IMR-90 (cell line): ENCODE measurements at regions of chr20 and their contacts with region 1.

Region 1: GRCh38 chr20:50321797-50322480 is 131.3 kb downstream of the CEBPB start:
- DNase-seq: peak; percentile 72
- ATAC-seq: peak; percentile 55
- H3K4me3 ChIP-seq: no peak overlapping the region
- H3K27ac ChIP-seq: peak overlapping the region; percentile 70
- H3K4me1 ChIP-seq: peaks cover 25% of the 10 kb centered on the region
- H3K27me3 ChIP-seq: no peaks in the 10 kb centered on the region
- CTCF ChIP-seq: no peak
- POLR2A ChIP-seq: no peak; the same call in 1 of the 2 replicates
- RAD21 ChIP-seq: 0 out of 2 replicates have a peak, but pooled peaks have one; percentile 3

Region 2: GRCh38 chr20:50108556-50109235 is 213.2 kb before region 1 on chr20:
- CTCF ChIA-PET with region 1: no interaction called
- POLR2A ChIA-PET with region 1: interaction called, 12 read pairs
- dilution Hi-C with region 1: no loop called
- in situ Hi-C with region 1: no loop called
- intact Hi-C with region 1: no loop called
- DNase-seq: no peak
- ATAC-seq: no peak
- H3K4me3 ChIP-seq: no peak overlapping the region
- H3K27ac ChIP-seq: no peak overlapping the region
- H3K4me1 ChIP-seq: peaks cover 32% of the 10 kb centered on the region
- H3K27me3 ChIP-seq: no peaks in the 10 kb centered on the region
- CTCF ChIP-seq: no peak
- POLR2A ChIP-seq: no peak
- RAD21 ChIP-seq: no peak

Region 3: DNA sequence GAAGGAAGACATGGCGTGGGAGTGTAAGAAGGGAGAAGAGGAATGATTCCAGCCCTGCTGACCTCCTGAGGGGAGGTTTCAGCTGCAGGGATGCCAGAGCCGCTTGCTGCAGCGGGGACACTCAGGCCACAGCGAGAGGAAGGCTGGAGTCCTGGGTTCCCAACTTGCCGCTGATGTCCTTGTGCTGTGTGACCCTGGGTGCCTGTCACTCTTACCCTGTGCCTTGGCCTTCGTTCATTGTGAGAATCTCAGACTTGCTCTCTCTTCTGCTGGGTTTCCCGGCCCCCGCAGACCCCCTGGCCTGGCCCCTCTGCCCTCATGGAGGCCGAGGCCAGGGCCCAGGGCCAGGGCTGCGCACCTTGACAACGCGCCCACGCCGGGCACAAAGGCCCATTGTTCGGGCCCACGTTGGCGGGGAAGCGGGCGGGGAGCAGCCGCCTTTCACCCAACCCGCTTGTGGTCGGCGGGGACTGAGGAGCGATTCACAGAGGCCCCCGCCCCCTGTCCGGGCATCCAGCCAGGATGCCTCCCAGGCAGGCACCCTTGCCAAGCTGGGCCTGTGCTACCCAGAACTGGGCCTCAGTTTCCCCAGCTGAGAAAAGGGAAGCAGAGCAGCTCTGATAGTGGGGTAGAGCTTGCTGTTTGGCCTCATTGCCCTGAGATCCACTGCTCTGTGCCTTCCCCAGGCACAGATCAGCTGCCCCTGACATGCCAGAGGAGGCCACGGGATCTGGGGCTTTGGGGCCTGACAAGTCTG is 78.9 kb before region 1 on chr20:
- CTCF ChIA-PET with region 1: no interaction called
- POLR2A ChIA-PET with region 1: no interaction called
- dilution Hi-C with region 1: no loop called
- in situ Hi-C with region 1: no loop called
- intact Hi-C with region 1: no loop called
- DNase-seq: no peak
- ATAC-seq: no peak
- H3K4me3 ChIP-seq: no peak overlapping the region
- H3K27ac ChIP-seq: no peak overlapping the region
- H3K4me1 ChIP-seq: peaks cover 6% of the 10 kb centered on the region; the same call in 1 of the 2 replicates
- H3K27me3 ChIP-seq: no peaks in the 10 kb centered on the region
- CTCF ChIP-seq: no peak
- POLR2A ChIP-seq: no peak
- RAD21 ChIP-seq: no peak

Region 4: GRCh38 chr20:50415516-50416113 is 93.7 kb after region 1 on chr20:
- CTCF ChIA-PET with region 1: no interaction called
- POLR2A ChIA-PET with region 1: no interaction called
- dilution Hi-C with region 1: no loop called
- in situ Hi-C with region 1: no loop called
- intact Hi-C with region 1: no loop called
- DNase-seq: peak; percentile 87
- ATAC-seq: peak; percentile 95
- H3K4me3 ChIP-seq: no peak overlapping the region
- H3K27ac ChIP-seq: peak overlapping the region; percentile 84
- H3K4me1 ChIP-seq: peaks cover 16% of the 10 kb centered on the region
- H3K27me3 ChIP-seq: no peaks in the 10 kb centered on the region
- CTCF ChIP-seq: no peak
- POLR2A ChIP-seq: 0 out of 2 replicates have a peak, but pooled peaks have one; percentile 38
- RAD21 ChIP-seq: no peak; the same call in 1 of the 2 replicates

Region 5: GRCh38 chr20:50645253-50646118 is 323.5 kb after region 1 on chr20:
- CTCF ChIA-PET with region 1: no interaction called
- POLR2A ChIA-PET with region 1: no interaction called
- dilution Hi-C with region 1: no loop called
- in situ Hi-C with region 1: no loop called
- intact Hi-C with region 1: no loop called
- DNase-seq: peak; percentile 100
- ATAC-seq: peak; percentile 93
- H3K4me3 ChIP-seq: no peak overlapping the region
- H3K27ac ChIP-seq: peak overlapping the region; percentile 98
- H3K4me1 ChIP-seq: peaks cover 19% of the 10 kb centered on the region
- H3K27me3 ChIP-seq: no peaks in the 10 kb centered on the region
- CTCF ChIP-seq: 0 out of 2 replicates have a peak, but pooled peaks have one; percentile 10
- POLR2A ChIP-seq: no peak
- RAD21 ChIP-seq: no peak